ENCODE measurements at regions of chr4 and their contacts with region 1.

Region 1: DNA sequence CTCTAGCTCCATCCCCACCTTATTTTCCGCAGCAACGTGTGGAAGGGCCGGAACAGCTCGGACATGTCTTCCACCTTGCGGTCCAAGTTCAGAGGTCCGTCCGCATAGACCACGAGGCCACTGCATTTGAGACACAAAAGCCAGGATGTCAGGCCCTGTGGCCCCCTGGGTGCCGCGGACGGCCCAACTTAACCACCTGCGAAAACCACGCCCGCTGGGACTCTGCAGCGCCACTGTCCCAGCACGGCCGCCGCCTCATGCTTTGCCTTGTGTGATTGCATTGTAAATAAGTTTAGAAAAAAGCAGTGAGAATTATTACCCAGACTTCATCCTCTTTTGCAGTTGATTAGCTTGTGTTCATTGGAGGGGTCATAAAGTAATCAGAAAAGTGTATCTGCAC is 58.2 kb upstream of the MXD4 start:
- DNase-seq: no peak
- H3K4me3 ChIP-seq: no peak overlapping the region
- CTCF ChIP-seq: no peak

Region 2: GRCh38 chr4:2241410-2242353 is 78.5 kb before region 1 on chr4 and contains the starts of genes HAUS3 and POLN:
- in situ Hi-C with region 1: loop called (anchors 10 kb)
- DNase-seq: peak; percentile 95
- H3K4me3 ChIP-seq: peak within 1 kb of the TSS; percentile 84
- CTCF ChIP-seq: peak; percentile 5

Region 3: GRCh38 chr4:2378401-2378800 is 58.2 kb after region 1 on chr4:
- in situ Hi-C with region 1: no loop called
- DNase-seq: no peak
- H3K4me3 ChIP-seq: no peak overlapping the region
- CTCF ChIP-seq: no peak

Region 4: GRCh38 chr4:2393353-2394270 is 73.5 kb after region 1 on chr4:
- in situ Hi-C with region 1: loop called (anchors 5 kb)
- DNase-seq: no peak
- H3K4me3 ChIP-seq: no peak overlapping the region
- CTCF ChIP-seq: no peak

Measured in astrocyte of the cerebellum (primary cell).